ENCODE measurements at regions of chr4 and their contacts with region 1.

Region 1: DNA sequence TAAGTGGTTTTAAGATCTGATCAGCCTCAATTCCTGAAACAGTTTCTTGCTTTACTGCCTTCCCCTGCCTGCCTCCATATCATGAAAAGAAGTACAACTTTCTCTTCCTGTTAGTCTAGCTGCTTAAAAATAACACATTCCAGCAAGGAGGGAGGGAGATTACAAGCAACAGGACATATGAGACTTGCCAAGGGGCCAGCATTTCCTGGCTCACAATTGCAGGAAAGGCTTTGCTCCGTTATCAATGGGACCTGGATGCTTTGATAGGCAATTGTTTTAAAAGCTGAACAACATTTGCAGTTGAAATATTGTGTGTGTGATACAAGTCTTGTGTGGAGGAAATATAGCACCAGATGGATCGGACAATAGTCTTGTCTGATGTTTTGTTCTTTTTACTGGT is 425.0 kb downstream of the FAT4 start:
- DNase-seq: no peak
- H3K4me3 ChIP-seq: no peak overlapping the region
- H3K27ac ChIP-seq: no peak overlapping the region
- H3K4me1 ChIP-seq: no peaks in the 10 kb centered on the region
- H3K27me3 ChIP-seq: no peaks in the 10 kb centered on the region
- CTCF ChIP-seq: no peak
- POLR2A ChIP-seq: no peak

Region 2: GRCh38 chr4:125594056-125594602 is 145.6 kb before region 1 on chr4:
- intact Hi-C with region 1: no loop called
- DNase-seq: no peak
- H3K4me3 ChIP-seq: no peak overlapping the region
- H3K27ac ChIP-seq: no peak overlapping the region
- H3K4me1 ChIP-seq: no peaks in the 10 kb centered on the region
- H3K27me3 ChIP-seq: no peaks in the 10 kb centered on the region
- CTCF ChIP-seq: no peak
- POLR2A ChIP-seq: no peak

Region 3: GRCh38 chr4:125714845-125715244 is 24.9 kb before region 1 on chr4:
- intact Hi-C with region 1: loop called (anchors 1 kb)
- DNase-seq: no peak
- H3K4me3 ChIP-seq: no peak overlapping the region
- H3K27ac ChIP-seq: no peak overlapping the region
- H3K4me1 ChIP-seq: no peaks in the 10 kb centered on the region
- H3K27me3 ChIP-seq: no peaks in the 10 kb centered on the region
- CTCF ChIP-seq: no peak
- POLR2A ChIP-seq: no peak

Region 4: DNA sequence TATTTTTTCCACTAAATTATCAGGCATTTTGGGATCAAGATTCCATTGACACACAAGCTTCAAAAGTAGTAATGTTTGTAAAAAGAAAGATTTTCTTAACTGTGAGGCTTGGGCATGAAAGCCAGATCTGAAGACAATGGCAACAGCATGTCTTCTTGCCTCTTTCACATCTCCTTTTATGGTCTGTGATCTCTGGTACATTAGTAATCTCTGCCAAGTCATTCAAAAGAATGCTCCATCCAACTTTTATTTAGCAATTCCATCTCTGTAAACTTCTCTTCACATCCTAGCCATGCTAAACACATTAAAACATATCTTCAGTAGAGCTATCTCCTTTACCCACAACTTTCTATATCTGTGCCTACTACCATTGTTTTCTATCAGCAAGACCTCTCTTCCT is 40.4 kb after region 1 on chr4:
- intact Hi-C with region 1: no loop called
- DNase-seq: no peak
- H3K4me3 ChIP-seq: no peak overlapping the region
- H3K27ac ChIP-seq: no peak overlapping the region
- H3K4me1 ChIP-seq: no peaks in the 10 kb centered on the region
- H3K27me3 ChIP-seq: no peaks in the 10 kb centered on the region
- CTCF ChIP-seq: no peak
- POLR2A ChIP-seq: no peak